ENCODE measurements at regions of chr19 and their contacts with region 1.

Region 1: GRCh38 chr19:48713864-48714758 is 5.4 kb downstream of the MAMSTR start:
- DNase-seq: peak; percentile 94 to 99 (median 96)
- ATAC-seq: peak; percentile 93
- H3K4me3 ChIP-seq: peak overlapping the region; percentile 68
- H3K4me3 Mint-ChIP-seq: peak overlapping the region; percentile 88
- H3K27ac ChIP-seq: peak overlapping the region; percentile 23 to 41
- H3K27ac Mint-ChIP-seq: peak overlapping the region; percentile 50
- H3K4me1 ChIP-seq: peaks cover 25% of the 10 kb centered on the region
- H3K4me1 Mint-ChIP-seq: peaks cover 21% of the 10 kb centered on the region
- H3K27me3 ChIP-seq: no peaks in the 10 kb centered on the region
- H3K27me3 Mint-ChIP-seq: no peaks in the 10 kb centered on the region
- CTCF ChIP-seq: no peak

Region 2: DNA sequence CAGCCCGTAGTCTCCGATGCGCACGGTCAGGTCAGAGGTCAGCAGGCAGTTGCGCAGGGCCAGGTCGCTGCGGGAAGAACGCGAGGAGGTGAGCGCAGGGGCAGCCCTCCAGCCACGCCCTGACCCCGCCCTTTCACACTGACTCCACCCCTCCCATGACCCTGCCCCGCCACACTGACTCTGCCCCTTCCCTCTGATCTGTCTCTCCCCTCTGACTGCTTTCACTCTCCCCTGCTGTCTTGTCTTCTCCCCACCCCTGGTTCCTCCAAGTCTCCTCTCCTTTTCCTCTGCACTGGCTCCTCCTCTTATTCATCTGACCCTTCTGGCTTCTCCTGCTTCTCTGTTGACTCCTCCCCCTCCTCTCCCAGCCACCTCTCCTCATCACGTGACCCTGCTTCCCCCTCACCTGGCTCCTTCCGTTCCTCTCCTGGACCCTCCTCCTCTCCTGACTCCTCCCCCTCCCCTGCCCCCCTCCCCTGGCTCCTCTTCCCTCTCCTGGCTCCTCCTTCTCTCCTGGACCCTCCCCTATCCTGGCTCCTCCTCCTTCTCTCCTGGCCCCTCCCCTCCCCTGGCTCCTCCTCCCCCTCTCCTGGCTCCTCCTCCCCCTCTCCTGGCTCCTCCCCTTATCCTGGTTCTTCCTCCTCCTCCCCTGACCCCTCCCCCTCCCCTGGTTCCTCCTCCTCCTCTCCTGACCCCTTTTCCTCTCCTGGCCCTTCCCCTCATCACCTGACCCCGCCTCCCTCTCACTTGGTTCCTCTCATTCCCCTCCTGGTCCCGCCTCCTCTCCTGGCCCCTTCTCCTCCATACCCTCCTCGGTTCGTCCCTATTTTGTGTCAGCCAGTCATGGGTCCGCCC is 212.4 kb before region 1 on chr19:
- CTCF ChIA-PET with region 1: no interaction called
- POLR2A ChIA-PET with region 1: no interaction called
- intact Hi-C with region 1: loop called in 1 of 2 experiments (anchors 10 kb)
- DNase-seq: peak in 13 of 14 experiments; percentile 24 to 91 (median 68)
- ATAC-seq: peak; percentile 76
- H3K4me3 ChIP-seq: peak overlapping the region; percentile 34
- H3K4me3 Mint-ChIP-seq: peak overlapping the region; percentile 67
- H3K27ac ChIP-seq: peak overlapping the region in 1 of 2 donors; percentile 41
- H3K27ac Mint-ChIP-seq: no peak overlapping the region
- H3K4me1 ChIP-seq: peaks cover 43% of the 10 kb centered on the region
- H3K4me1 Mint-ChIP-seq: peaks cover 24% of the 10 kb centered on the region
- H3K27me3 ChIP-seq: peaks cover 0 to 20% of the 10 kb centered on the region in 2 experiments
- H3K27me3 Mint-ChIP-seq: peaks cover 11% of the 10 kb centered on the region
- CTCF ChIP-seq: no peak

Region 3: DNA sequence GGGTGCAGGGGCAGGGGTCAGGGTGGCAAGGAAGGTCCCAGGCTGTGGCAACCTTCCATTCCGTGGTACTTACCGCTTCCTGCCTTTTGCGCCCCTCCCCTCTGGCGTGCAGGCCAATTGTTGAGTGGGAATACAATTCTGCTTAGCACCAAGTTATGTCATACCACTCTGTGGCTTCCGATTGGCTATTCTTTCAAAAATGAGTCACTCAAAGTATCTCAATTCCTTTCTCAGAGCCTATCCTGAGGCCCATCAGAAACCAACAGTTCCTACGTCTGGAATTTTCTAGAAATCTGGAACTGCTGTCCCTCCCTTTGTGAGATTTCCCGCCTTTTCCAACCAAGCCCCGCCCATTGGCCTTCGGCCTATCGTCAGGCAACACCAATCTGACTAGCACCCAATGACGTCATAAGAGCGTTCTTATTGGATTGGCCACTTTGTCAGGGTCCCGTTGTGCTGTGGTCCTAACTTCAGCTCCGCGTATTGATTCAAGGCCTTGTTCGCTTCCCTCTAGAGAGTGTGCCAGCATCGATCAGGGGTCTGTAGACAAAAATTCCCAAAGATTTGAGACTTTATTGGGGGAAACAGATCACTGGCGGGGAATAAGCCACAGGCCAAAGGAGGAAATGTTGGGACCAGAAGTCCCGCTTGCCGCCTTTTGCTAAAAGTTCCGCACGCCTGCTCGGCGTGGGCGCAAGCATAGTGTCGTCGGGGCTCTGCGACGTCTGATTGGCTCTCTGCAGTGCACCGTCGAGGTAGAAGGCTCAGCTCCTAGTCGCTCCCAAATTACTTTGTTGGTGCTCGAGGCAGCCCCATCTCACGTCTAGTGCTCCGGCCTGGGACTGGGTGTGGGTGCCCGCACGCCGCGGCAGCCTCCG is 53.0 kb before region 1 on chr19:
- CTCF ChIA-PET with region 1: interaction called, 3 read pairs
- POLR2A ChIA-PET with region 1: no interaction called
- intact Hi-C with region 1: loop called in 1 of 2 experiments (anchors 5 kb)
- DNase-seq: peak; percentile 60 to 92 (median 70)
- ATAC-seq: peak; percentile 91
- H3K4me3 ChIP-seq: peak overlapping the region; percentile 21
- H3K4me3 Mint-ChIP-seq: peak overlapping the region; percentile 73
- H3K27ac ChIP-seq: peak overlapping the region; percentile 42 to 46
- H3K27ac Mint-ChIP-seq: peak overlapping the region; percentile 82
- H3K4me1 ChIP-seq: peaks cover 16% of the 10 kb centered on the region
- H3K4me1 Mint-ChIP-seq: peaks cover 9% of the 10 kb centered on the region
- H3K27me3 ChIP-seq: no peaks in the 10 kb centered on the region
- H3K27me3 Mint-ChIP-seq: no peaks in the 10 kb centered on the region
- CTCF ChIP-seq: no peak

Region 4: DNA sequence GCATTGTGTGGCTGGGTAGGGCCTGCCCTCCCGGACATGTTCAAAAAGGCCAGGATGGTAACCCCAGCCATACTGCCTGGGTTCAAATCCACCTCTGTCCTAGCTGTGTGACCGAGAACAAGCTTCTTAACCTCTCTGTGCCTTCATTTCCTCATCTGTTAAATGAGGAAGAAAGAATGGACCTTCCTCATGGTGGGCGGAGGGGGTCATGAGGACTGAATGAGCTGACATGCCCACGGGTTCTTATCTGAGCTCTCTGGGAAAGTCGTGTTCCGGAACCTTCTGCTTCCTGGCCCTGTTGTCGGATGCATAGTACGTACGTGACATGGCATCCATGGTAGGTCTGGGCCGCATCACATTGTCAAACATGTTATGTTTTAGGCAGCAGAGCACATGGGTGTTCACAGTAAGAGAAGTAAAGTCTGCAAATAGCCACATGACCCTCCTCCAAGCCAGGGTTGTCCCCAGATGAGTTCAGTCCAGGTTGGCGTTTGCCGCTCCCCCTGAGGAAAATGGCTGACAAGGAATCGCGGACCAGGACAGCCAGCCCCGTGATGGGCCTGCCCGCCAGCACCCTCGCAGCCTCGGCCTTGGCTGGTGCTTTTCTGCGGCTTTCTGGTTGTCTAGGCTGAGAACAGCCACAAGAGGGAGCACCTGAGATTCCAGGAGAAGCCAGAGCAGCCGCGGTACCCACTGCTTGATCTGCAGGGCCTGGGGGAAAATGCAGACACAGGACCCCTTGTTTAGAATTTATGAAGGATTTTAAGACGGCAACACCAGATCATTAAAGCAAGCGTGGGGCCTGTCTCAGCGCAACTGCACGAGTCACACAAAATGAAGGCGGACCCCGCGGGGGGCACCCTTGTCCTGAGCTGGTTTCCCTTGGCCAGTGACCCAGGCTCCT is 38.9 kb before region 1 on chr19:
- CTCF ChIA-PET with region 1: no interaction called
- POLR2A ChIA-PET with region 1: no interaction called
- intact Hi-C with region 1: loop called in 1 of 2 experiments (anchors 5 kb)
- DNase-seq: peak; percentile 62 to 89 (median 68)
- ATAC-seq: peak; percentile 98
- H3K4me3 ChIP-seq: no peak overlapping the region
- H3K4me3 Mint-ChIP-seq: no peak overlapping the region
- H3K27ac ChIP-seq: no peak overlapping the region
- H3K27ac Mint-ChIP-seq: no peak overlapping the region
- H3K4me1 ChIP-seq: peaks cover 9% of the 10 kb centered on the region
- H3K4me1 Mint-ChIP-seq: peaks cover 7% of the 10 kb centered on the region
- H3K27me3 ChIP-seq: no peaks in the 10 kb centered on the region
- H3K27me3 Mint-ChIP-seq: no peaks in the 10 kb centered on the region
- CTCF ChIP-seq: peak; percentile 84

Region 5: DNA sequence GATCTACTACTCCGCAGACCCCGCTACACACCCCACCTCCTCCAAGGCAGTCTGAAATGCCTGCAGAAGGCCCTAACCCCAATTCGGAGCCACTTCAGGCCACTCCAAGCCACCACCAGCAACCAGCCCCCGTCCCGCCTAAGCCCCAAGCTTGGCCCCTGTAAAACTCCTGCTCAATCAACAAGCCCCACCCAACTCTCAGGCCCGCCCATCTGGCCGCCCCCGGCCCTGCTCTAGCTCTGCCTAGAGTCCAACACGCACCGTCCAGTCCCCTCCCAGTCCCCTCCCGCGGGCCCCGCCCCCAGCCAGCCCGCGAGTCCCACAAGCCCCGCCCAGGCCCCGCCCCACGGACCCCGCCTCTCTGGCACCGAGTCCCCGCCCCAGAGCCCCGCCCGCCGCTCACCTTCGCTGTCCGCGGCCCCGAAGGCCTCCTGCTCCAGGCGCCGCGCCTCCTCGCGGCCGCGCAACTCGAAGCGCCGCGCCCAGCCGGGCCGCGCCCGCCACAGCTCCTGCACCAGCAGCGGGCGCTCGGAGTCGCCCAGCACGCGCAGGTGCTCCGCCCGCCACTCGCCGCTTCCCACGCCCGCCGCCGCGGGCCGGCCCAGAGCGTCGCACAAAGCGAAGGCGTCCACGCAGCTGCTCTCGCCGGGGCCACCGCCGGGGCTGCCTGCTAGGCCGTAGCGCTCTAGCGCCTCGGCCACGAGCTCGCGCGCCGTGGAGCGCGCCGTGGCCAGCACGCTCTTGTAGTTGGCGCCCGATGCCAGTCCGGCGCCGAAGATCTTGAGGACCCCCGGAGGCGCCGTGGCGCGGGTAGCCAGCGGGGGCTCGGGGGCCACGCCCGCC is 24.7 kb after region 1 on chr19:
- CTCF ChIA-PET with region 1: interaction called, 14 read pairs
- POLR2A ChIA-PET with region 1: interaction called, 4 read pairs
- intact Hi-C with region 1: loop called in 1 of 2 experiments (anchors 1 kb)
- DNase-seq: peak; percentile 88 to 97 (median 93)
- ATAC-seq: peak; percentile 92
- H3K4me3 ChIP-seq: no peak overlapping the region
- H3K4me3 Mint-ChIP-seq: peak overlapping the region; percentile 65
- H3K27ac ChIP-seq: no peak overlapping the region
- H3K27ac Mint-ChIP-seq: no peak overlapping the region
- H3K4me1 ChIP-seq: peaks cover 32% of the 10 kb centered on the region
- H3K4me1 Mint-ChIP-seq: peaks cover 20% of the 10 kb centered on the region
- H3K27me3 ChIP-seq: peaks cover 0 to 12% of the 10 kb centered on the region in 2 experiments
- H3K27me3 Mint-ChIP-seq: no peaks in the 10 kb centered on the region
- CTCF ChIP-seq: no peak

Measured in CD4-positive, alpha-beta T cell (primary cell).